Endothelial cell of umbilical vein (primary cell): ENCODE measurements at regions of chr16 and their contacts with region 1.

Region 1: GRCh38 chr16:22262460-22262859 is 34.7 kb upstream of the POLR3E start:
- DNase-seq: peak; percentile 30
- H3K4me3 ChIP-seq: no peak overlapping the region
- H3K27ac ChIP-seq: no peak overlapping the region
- H3K4me1 ChIP-seq: peaks cover 7% of the 10 kb centered on the region
- H3K27me3 ChIP-seq: no peaks in the 10 kb centered on the region
- CTCF ChIP-seq: no peak
- POLR2A ChIP-seq: no peak

Region 2: GRCh38 chr16:22206013-22206841 is 56.2 kb before region 1 on chr16 and contains the start of gene EEF2K:
- CTCF ChIA-PET with region 1: interaction called, 3 read pairs
- POLR2A ChIA-PET with region 1: no interaction called
- dilution Hi-C with region 1: no loop called
- intact Hi-C with region 1: loop called (anchors 1 kb)
- DNase-seq: peak; percentile 95
- H3K4me3 ChIP-seq: peak within 1 kb of the TSS; percentile 70 to 88 (median 79)
- H3K27ac ChIP-seq: peak within 1 kb of the TSS; percentile 85
- H3K4me1 ChIP-seq: peaks cover 16% of the 10 kb centered on the region
- H3K27me3 ChIP-seq: no peaks in the 10 kb centered on the region
- CTCF ChIP-seq: peak; percentile 66 to 81
- POLR2A ChIP-seq: peak; percentile 68
- total RNA-seq, gene EEF2K: 44.1 and 48.6 TPM in 2 replicates